Activated naive CD8-positive, alpha-beta T cell treated with anti-CD3 and anti-CD28 coated beads, Interleukin-2, amount 10 ng/mL, durations not matched to agents 7 days and 5 days (primary cell): ENCODE measurements at regions of chr1 and their contacts with region 1.

Region 1: DNA sequence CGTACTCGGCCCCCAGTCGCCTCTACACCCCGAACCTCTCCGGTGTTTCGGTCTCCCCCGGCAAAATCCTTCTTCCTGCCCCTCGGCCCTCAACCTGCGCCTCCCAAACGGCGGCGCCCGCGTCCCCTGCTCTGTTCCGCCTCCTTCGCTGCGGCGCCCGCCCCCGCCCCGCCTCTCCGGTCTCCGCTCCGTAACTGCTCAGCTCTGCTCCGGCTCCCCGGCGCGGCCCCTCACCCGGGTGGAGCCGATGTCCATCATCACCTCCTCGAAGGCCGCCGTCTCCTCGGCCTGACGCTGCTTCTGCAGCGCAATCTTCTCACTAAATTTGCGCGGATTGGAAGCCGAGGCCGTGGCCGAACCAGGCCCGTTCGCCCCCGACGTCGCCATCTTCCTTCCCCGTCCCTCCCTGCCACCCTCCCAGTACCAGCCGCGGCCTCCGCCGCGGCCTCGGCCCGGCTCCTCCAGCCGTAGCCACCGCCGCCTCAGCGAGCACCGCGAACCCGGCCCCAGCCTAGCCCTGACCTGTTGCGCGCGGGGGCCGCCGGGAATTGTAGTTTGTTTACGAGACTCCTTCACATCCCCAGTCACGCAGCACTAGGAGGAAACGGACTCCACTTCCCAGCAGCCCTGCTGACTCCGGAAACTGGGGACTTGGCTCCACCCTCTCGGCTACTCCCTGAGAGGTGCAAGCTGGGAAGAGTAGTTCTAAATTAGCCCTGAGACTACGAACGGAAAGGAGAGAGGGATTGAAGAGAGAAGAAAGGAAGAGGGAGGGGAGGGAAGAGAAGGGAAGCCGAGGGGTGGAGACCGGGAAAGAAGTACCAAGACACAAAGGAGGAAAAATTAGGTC is at the start of gene CRTC2:
- DNase-seq: peak; percentile 94
- ATAC-seq: peak; percentile 86
- H3K4me3 Mint-ChIP-seq: peak within 1 kb of the TSS; percentile 94
- H3K27ac Mint-ChIP-seq: peak within 1 kb of the TSS; percentile 98
- H3K4me1 Mint-ChIP-seq: peaks cover 45% of the 10 kb centered on the region
- H3K27me3 Mint-ChIP-seq: no peaks in the 10 kb centered on the region
- total RNA-seq, gene CRTC2: 104 to 115 TPM

Region 2: DNA sequence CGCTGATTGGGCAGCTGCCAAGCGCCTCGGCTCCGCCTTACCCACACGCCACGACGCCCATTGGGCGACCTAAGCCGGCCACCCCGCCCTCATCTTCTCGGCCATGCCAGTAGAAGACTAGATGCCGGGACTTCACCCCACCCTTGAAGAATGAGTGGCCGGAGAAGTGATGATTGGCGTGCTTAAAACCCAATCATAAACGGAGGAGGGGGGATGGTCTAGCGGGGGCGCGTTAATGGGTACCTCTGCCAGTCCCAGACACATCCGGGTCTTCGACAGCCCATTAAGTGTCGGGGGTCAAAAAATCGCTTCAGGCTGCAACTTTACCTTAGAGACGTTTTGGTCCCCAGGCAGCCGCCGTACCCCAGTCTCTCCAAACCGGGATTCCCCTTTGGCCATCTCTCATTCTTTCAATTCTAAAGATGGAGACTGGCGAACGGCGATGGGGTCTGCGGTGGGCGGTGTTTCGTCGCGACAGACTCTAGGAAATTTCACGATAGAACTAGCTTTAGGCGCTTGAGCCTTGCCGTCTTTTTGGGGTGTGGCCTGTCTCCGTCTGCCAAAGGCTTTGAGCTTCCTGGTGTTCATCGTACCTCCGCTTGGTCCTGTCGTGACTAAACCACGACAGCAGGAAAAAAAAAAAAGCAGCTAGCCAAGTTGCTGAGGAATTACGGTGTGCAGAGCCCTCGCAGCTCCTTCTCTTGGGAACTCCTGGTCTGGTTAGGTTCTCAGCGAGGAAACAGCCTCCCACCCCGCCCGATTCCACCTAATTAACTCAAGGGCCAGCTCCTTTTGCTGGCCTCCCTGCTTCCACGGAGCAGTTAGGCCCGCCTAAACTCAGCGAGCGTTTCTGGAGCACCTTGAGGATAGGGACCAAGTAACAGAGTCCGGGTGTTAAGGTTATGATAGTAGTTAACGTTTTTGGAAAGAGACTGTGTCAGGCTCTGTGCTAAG is 35.1 kb before region 1 on chr1 and contains the start of gene GATAD2B:
- POLR2A ChIA-PET with region 1: interaction called, 16 read pairs
- DNase-seq: peak; percentile 96
- ATAC-seq: peak; percentile 94
- H3K4me3 Mint-ChIP-seq: peak within 1 kb of the TSS; percentile 95
- H3K27ac Mint-ChIP-seq: peak within 1 kb of the TSS; percentile 98
- H3K4me1 Mint-ChIP-seq: peaks cover 36% of the 10 kb centered on the region
- H3K27me3 Mint-ChIP-seq: no peaks in the 10 kb centered on the region
- total RNA-seq, gene GATAD2B: 86.3 to 96.7 TPM